ENCODE measurements at regions of chr7 and their contacts with region 1.

Region 1: DNA sequence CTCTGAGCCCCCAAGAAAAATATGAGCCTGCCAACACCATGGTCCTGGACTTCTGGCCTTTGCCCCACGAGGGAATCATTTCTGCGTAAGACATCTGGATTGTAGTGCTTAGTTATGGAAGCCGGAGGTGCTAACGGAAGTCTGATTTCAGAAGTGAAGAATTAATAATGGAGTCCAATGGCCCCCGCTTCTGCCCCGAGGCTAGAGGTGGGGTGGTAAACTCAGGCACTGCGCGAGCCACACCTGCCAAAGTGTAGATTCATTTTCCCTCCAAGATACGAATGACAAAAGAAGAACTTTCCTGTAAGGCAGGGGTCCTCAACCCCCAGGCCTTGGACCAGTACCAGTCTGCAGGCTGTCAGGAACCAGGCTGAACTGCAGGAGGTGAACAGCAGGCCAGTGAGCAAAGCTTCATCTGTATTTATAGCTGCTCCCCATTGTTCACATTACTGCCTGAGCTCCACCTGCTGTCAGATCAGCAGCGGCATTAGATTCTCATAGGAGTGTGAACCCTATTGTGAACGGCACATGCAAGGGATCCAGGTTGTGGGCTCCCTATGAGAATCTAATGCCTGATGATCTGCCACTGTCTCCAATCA is 22.2 kb downstream of the CNPY1 start:
- DNase-seq: no peak
- ATAC-seq: no peak
- H3K4me3 ChIP-seq: no peak overlapping the region
- H3K27ac ChIP-seq: no peak overlapping the region
- H3K4me1 ChIP-seq: no peaks in the 10 kb centered on the region
- H3K27me3 ChIP-seq: peaks cover 0 to 86% (median 69%) of the 10 kb centered on the region in 7 donors
- CTCF ChIP-seq: peak in 1 of 9 donors; percentile 24

Region 2: GRCh38 chr7:155398944-155399343 is 125.2 kb before region 1 on chr7:
- intact Hi-C with region 1: loop called in 1 of 10 experiments (anchors 10 kb)
- DNase-seq: no peak
- ATAC-seq: no peak
- H3K4me3 ChIP-seq: no peak overlapping the region
- H3K27ac ChIP-seq: no peak overlapping the region
- H3K4me1 ChIP-seq: no peaks in the 10 kb centered on the region
- H3K27me3 ChIP-seq: peaks cover 6 to 83% (median 75%) of the 10 kb centered on the region in 7 donors
- CTCF ChIP-seq: no peak

Measured in heart right ventricle (tissue), 16 donors.